Activated CD4-positive, alpha-beta T cell treated with anti-CD3 and anti-CD28 coated beads, Interleukin-2, amount 10 ng/mL, durations not matched to agents 24 days and 14 days (primary cell): ENCODE measurements at regions of chr1 and their contacts with region 1.

Region 1: GRCh38 chr1:198157241-198157846 is 546 bp downstream of the NEK7 start:
- DNase-seq: peak; percentile 95
- H3K4me3 Mint-ChIP-seq: peak overlapping the region; percentile 97
- H3K27ac Mint-ChIP-seq: peak overlapping the region; percentile 95
- H3K4me1 Mint-ChIP-seq: peaks cover 22% of the 10 kb centered on the region
- H3K27me3 Mint-ChIP-seq: no peaks in the 10 kb centered on the region

Region 2: DNA sequence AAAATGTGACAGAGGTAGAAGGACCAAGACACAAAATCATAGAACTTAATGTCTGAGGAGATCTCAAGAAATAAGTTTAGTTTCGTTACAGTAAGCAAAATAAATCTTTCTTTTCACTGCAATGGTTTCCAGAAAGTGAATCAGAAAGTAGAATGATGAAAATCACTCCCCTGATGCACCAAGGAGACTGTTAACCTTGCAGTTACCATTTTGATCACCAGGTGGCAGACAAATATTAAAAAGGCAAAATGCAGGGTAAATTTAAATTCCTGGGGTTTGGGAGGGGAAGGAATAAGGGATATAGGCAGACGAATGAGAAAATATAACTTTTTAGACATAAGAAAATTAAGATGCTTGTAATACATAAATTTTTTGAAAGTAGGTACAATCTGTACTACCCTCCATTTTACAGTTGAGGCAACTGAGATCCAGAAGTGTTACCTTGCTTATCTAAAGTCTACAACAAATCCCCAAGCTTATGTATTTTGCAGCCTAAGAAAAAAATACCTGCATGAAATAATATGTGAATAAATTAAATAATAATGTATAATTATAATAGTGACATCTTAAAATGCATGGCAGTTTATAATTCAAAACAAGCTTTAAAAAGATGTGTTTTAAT is 636.1 kb before region 1 on chr1:
- intact Hi-C with region 1: loop called (anchors 5 kb)
- DNase-seq: peak; percentile 81
- H3K4me3 Mint-ChIP-seq: no peak overlapping the region
- H3K27ac Mint-ChIP-seq: no peak overlapping the region
- H3K4me1 Mint-ChIP-seq: peaks cover 5% of the 10 kb centered on the region
- H3K27me3 Mint-ChIP-seq: no peaks in the 10 kb centered on the region

Region 3: GRCh38 chr1:198088360-198089071 is 68.8 kb before region 1 on chr1:
- intact Hi-C with region 1: loop called (anchors 1 kb)
- DNase-seq: peak; percentile 68
- H3K4me3 Mint-ChIP-seq: no peak overlapping the region
- H3K27ac Mint-ChIP-seq: no peak overlapping the region
- H3K4me1 Mint-ChIP-seq: peaks cover 6% of the 10 kb centered on the region
- H3K27me3 Mint-ChIP-seq: peaks cover 3% of the 10 kb centered on the region

Region 4: DNA sequence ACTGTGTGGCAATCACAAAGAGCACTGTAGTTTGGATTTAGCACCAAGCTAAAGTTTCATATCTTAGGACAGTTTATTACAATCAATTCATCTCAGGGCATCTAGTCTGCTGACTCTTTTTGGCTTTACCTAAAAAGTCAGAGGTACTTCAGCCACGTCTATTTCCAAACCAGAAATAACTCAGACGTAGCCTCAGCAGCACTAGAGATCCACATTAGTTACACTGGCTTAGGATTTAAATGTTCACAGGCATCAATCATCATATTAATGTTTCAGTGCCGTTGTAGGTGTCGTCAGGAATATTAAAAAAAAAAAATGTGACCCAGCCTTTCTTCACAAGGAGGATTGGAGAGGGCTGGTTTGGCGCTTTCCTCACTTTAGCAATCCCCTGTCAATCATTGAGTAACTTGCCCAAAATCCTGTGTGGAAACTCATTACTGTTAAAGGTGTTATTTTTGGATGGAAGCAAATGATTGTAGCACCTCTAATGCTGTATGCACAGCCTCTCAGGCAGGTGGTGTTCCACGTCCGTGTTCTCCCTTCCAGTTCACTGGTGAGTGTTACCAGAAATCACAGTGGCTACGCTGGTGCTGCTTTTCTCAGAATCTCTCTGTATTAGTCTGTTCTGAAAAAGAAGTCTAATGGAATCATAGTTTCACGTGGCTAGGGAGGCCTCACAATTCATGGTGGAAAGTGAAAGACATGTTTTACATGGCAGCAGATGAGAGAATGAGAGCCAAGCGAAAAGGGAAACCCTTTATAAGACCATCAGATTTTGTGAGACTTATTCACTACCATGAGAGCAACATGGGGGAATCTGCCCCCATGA is 44.8 kb after region 1 on chr1:
- intact Hi-C with region 1: loop called (anchors 2 kb)
- DNase-seq: peak; percentile 73
- H3K4me3 Mint-ChIP-seq: peak overlapping the region; percentile 68
- H3K27ac Mint-ChIP-seq: peak overlapping the region; percentile 86
- H3K4me1 Mint-ChIP-seq: peaks cover 49% of the 10 kb centered on the region
- H3K27me3 Mint-ChIP-seq: no peaks in the 10 kb centered on the region

Region 5: GRCh38 chr1:198465201-198466144 is 308.1 kb after region 1 on chr1:
- intact Hi-C with region 1: loop called (anchors 5 kb)
- DNase-seq: peak; percentile 62
- H3K4me3 Mint-ChIP-seq: no peak overlapping the region
- H3K27ac Mint-ChIP-seq: no peak overlapping the region
- H3K4me1 Mint-ChIP-seq: peaks cover 4% of the 10 kb centered on the region
- H3K27me3 Mint-ChIP-seq: peaks cover 2% of the 10 kb centered on the region

Region 6: DNA sequence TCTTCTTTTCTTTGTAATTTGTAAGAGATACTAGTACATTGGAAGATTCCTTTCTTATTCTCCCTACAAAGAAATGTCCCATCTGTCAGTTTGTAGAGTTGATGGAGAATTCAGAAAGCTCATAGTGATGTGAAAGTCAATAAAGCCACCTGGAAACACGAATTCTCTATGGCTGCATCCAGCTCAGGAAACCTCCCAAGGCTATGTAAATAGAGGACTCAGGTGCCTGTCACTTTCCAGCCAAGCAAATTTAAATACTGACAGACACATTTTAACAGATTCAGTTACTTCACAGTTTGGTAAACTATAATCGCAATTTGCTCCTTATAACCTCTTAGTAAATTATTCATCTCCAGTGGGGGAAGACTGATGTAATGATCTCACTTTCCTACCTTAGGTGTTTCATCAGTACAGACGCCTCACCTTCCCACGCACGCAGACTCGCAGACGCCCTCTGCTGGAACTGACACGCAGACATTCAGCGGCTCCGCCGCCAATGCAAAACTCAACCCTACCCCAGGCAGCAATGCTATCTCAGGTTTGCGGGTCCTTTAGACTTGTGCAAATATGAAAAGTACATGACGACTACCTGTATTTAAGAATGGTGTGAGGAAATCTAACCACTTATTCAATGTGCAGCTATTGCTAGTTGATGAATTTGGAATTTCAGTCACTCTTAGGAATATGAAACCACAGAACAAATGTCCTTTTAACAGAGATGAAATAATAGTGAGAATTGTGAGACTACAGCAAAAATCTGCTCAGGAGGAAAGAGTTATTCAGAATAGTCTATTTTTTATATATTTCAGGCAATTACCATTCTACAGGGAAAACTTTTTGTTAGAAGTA is 542.0 kb after region 1 on chr1:
- intact Hi-C with region 1: no loop called
- DNase-seq: peak; percentile 86
- H3K4me3 Mint-ChIP-seq: peak overlapping the region; percentile 41
- H3K27ac Mint-ChIP-seq: peak overlapping the region; percentile 83
- H3K4me1 Mint-ChIP-seq: peaks cover 68% of the 10 kb centered on the region
- H3K27me3 Mint-ChIP-seq: no peaks in the 10 kb centered on the region

Region 7: DNA sequence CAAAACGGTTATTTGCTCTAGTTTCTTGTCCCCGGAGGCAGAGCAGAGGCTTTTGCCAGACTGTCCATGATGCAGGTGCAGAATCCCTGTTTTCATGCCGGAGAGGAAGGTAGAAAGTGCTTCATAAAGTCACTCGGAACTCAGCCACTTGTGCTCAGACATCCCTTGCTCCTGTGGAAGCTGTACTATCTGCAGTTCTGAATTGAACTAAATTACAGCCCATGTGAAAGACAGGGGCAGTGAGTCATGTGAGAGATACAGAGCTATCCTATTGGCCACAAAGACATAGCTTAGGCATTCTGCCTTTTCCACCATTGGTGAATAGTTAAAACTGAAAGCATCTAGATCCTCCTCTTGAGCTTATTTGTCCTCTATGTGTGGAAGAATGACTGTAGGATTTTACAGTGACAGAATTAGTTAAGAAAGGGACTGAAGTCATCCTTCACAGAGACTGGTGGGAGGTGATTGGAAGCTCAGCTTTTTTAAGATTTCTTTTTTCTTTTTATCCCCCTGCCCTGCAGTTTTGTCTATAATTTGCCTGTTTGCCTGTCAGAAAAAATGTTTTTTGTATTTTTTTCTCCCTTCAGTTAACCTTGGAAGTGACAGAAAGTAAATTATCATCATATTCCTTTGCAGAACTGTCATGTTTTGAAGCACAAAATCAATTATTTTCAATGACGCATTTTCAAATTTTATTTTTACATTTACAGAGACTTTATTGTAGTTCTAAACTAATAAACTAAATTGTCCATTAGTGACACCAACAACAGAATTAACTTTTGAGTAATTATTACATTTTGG is 780.1 kb after region 1 on chr1:
- intact Hi-C with region 1: loop called (anchors 5 kb)
- DNase-seq: peak; percentile 91
- H3K4me3 Mint-ChIP-seq: no peak overlapping the region
- H3K27ac Mint-ChIP-seq: peak overlapping the region; percentile 93
- H3K4me1 Mint-ChIP-seq: peaks cover 15% of the 10 kb centered on the region
- H3K27me3 Mint-ChIP-seq: no peaks in the 10 kb centered on the region